ENCODE measurements at regions of chr11 and their contacts with region 1.

Region 1: DNA sequence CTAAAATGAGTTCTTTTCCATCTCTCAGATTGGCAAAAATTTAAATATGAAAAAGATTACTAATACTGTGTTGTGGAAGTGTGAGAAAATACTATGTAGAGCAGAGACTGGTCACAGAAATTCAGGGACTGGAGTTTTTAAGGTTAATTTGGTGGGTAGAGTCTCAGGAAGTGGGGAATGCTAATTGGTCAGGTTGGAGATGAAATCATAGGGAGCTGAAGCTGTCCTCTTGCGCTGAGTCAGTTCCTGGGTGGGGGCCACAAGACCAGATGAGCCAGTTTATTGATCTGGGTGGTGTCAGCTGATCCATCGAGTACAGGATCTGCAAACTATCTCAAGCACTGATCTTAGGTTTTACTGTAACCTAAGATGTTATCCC is 29.4 kb upstream of the TMEM86A start:
- DNase-seq: no peak
- ATAC-seq: no peak
- H3K4me3 ChIP-seq: no peak overlapping the region
- H3K4me3 Mint-ChIP-seq: peak overlapping the region in 2 of 10 donors; percentile 1 to 28
- H3K27ac ChIP-seq: no peak overlapping the region
- H3K27ac Mint-ChIP-seq: peak overlapping the region in 8 of 9 donors; percentile 6 to 89 (median 54)
- H3K4me1 ChIP-seq: peaks cover 20 to 26% of the 10 kb centered on the region in 2 donors
- H3K4me1 Mint-ChIP-seq: peaks cover 34 to 74% (median 54%) of the 10 kb centered on the region in 7 donors
- H3K27me3 ChIP-seq: no peaks in the 10 kb centered on the region
- H3K27me3 Mint-ChIP-seq: peaks cover 0 to 17% (median 0%) of the 10 kb centered on the region in 5 donors

Region 2: GRCh38 chr11:18457431-18457830 is 211.8 kb before region 1 on chr11:
- CTCF ChIA-PET with region 1: no interaction called
- POLR2A ChIA-PET with region 1: no interaction called
- intact Hi-C with region 1: no loop called
- DNase-seq: no peak
- ATAC-seq: no peak
- H3K4me3 ChIP-seq: no peak overlapping the region
- H3K4me3 Mint-ChIP-seq: no peak overlapping the region
- H3K27ac ChIP-seq: no peak overlapping the region
- H3K27ac Mint-ChIP-seq: no peak overlapping the region
- H3K4me1 ChIP-seq: no peaks in the 10 kb centered on the region
- H3K4me1 Mint-ChIP-seq: peaks cover 0 to 2% (median 0%) of the 10 kb centered on the region in 7 donors
- H3K27me3 ChIP-seq: no peaks in the 10 kb centered on the region
- H3K27me3 Mint-ChIP-seq: peaks cover 0 to 9% (median 3%) of the 10 kb centered on the region in 5 donors

Region 3: DNA sequence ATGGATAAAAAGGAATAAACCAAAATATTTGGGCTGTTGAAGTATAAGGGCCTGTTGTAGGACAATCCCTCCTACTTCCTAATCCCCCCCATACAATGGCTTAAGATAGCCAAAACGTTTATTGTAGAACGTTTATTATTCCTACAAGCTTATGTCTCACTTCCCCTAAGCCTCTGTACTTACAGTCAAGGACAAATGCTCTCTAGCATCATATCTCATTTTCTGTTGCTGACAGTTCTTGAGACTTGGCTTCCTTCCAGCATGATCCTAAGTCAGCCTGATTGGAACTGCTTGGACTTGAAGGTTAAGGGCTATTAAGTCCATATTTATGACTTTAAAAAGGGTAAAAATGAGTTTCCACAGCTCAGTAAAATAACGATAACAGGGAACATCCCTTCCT is 60.8 kb before region 1 on chr11:
- CTCF ChIA-PET with region 1: no interaction called
- POLR2A ChIA-PET with region 1: no interaction called
- intact Hi-C with region 1: no loop called
- DNase-seq: no peak
- ATAC-seq: no peak
- H3K4me3 ChIP-seq: no peak overlapping the region
- H3K4me3 Mint-ChIP-seq: no peak overlapping the region
- H3K27ac ChIP-seq: no peak overlapping the region
- H3K27ac Mint-ChIP-seq: no peak overlapping the region
- H3K4me1 ChIP-seq: no peaks in the 10 kb centered on the region
- H3K4me1 Mint-ChIP-seq: peaks cover 0 to 3% (median 0%) of the 10 kb centered on the region in 7 donors
- H3K27me3 ChIP-seq: no peaks in the 10 kb centered on the region
- H3K27me3 Mint-ChIP-seq: no peaks in the 10 kb centered on the region

Region 4: DNA sequence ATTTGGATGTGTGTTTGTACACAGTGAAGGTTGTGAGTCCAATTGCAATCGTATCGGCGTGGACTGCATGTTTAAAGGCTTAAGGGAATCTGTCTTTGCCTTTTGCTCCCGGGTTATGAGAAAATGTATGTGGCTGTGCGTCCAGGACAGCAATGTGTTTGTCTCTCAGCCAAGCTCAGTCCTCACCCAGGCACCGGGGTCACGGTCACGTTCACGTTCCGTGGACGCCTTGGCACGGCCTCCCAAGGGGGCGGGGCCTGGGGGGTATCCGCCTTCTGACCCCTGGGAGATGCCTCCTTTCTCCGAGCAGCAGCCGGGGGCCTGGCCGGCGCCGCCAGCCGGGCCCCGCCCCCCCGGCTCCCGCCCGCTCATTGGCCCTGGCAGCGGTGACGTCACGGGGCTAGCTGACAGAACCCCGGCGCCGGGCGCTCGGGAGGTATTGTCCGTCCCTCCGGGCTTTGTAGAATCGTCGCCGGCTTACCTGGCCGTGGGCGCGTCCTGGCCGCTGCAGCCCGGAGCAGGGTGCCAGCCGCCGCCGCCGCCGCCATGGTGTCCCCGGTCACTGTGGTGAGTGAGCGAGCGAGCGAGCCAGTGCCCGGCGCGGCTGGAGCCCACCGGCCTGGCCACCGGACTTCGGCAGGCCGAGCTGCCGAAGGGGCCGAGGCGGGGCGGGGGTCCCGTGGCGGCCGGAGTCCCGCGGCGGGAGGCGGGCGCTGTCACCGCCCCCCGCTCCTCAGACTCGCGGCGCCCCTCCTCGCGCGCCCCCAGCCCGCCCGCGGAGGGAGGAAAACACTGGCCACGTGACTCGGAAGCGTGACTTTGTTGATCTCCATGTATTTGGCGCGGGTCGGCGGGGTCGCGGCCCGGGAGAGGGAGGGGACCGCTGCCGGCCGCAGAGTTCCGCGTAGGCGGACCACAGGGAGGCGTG is 29.4 kb after region 1 on chr11 and contains the start of gene TMEM86A:
- CTCF ChIA-PET with region 1: interaction called, 3 read pairs
- POLR2A ChIA-PET with region 1: interaction called, 6 read pairs
- intact Hi-C with region 1: loop called in 1 of 2 experiments (anchors 1 kb)
- DNase-seq: peak; percentile 81 to 89 (median 87)
- ATAC-seq: peak; percentile 97
- H3K4me3 ChIP-seq: peak within 1 kb of the TSS; percentile 42
- H3K4me3 Mint-ChIP-seq: peak within 1 kb of the TSS; percentile 76 to 89 (median 84)
- H3K27ac ChIP-seq: peak within 1 kb of the TSS; percentile 72
- H3K27ac Mint-ChIP-seq: peak within 1 kb of the TSS; percentile 42 to 95 (median 89)
- H3K4me1 ChIP-seq: peaks cover 6% of the 10 kb centered on the region in 2 donors
- H3K4me1 Mint-ChIP-seq: peaks cover 14 to 27% (median 20%) of the 10 kb centered on the region in 7 donors
- H3K27me3 ChIP-seq: no peaks in the 10 kb centered on the region
- H3K27me3 Mint-ChIP-seq: peaks cover 0 to 39% (median 0%) of the 10 kb centered on the region in 5 donors
- total RNA-seq, gene TMEM86A: 0.53 to 6.5 (median 5.5) TPM

Region 5: GRCh38 chr11:18706330-18707243 is 37.4 kb after region 1 on chr11:
- CTCF ChIA-PET with region 1: no interaction called
- POLR2A ChIA-PET with region 1: interaction called, 4 read pairs
- intact Hi-C with region 1: loop called in 1 of 2 experiments (anchors 1 kb)
- DNase-seq: peak in 8 of 9 donors; percentile 34 to 73 (median 64)
- ATAC-seq: peak; percentile 83
- H3K4me3 ChIP-seq: peak overlapping the region; percentile 88
- H3K4me3 Mint-ChIP-seq: peak overlapping the region; percentile 90 to 98 (median 93)
- H3K27ac ChIP-seq: peak overlapping the region; percentile 68
- H3K27ac Mint-ChIP-seq: peak overlapping the region; percentile 81 to 98 (median 90)
- H3K4me1 ChIP-seq: peaks cover 9 to 10% of the 10 kb centered on the region in 2 donors
- H3K4me1 Mint-ChIP-seq: peaks cover 15 to 29% (median 25%) of the 10 kb centered on the region in 7 donors
- H3K27me3 ChIP-seq: no peaks in the 10 kb centered on the region
- H3K27me3 Mint-ChIP-seq: peaks cover 0 to 55% (median 0%) of the 10 kb centered on the region in 5 donors

Region 6: DNA sequence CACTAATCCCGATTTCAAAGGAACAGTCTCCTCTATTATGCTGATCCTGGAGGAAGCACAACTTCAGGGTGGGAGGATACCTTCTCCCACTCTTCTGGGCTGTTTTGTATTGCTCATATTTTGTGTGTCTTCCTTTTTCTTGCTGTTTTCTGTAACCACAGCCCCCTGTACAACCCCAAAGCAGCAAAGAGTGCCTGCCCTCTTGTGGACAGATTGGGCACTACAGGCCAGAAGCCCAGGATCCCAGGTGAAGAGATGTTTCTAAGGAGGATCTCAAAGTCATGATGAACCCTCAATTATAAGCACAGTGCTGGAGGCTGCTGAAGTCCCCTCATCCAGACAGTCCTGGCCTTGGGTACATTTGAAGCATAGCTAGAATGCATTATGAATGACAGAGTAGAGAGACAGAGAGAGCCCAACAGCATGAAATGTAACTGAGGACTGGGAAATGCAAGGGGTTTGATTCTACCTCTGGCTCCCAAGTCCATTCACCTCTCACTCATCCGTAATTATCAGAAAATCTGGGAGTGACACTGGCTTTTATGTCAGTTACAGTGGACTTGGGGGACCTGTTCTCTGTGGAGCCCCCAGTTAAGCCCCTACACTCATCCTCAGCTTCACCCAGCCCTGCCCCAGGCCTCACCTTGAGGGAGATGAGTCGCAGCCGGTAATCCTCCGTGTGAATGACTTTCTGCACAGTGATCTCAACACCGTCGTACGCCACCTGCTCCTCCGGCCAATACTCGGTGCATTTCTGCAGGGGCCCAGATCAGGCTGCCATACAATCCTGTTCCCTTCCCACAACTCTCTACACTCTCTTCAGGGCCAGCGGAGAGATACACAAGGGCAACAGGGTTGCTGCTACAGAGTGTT is 63.0 kb after region 1 on chr11:
- CTCF ChIA-PET with region 1: no interaction called
- POLR2A ChIA-PET with region 1: no interaction called
- intact Hi-C with region 1: loop called in 1 of 2 experiments (anchors 2 kb)
- DNase-seq: peak; percentile 44 to 81 (median 65)
- ATAC-seq: peak; percentile 79
- H3K4me3 ChIP-seq: no peak overlapping the region
- H3K4me3 Mint-ChIP-seq: no peak overlapping the region
- H3K27ac ChIP-seq: no peak overlapping the region
- H3K27ac Mint-ChIP-seq: peak overlapping the region in 1 of 9 donors; percentile 32
- H3K4me1 ChIP-seq: peaks cover 5 to 6% of the 10 kb centered on the region in 2 donors
- H3K4me1 Mint-ChIP-seq: peaks cover 4 to 15% (median 13%) of the 10 kb centered on the region in 7 donors
- H3K27me3 ChIP-seq: no peaks in the 10 kb centered on the region
- H3K27me3 Mint-ChIP-seq: peaks cover 0 to 9% (median 0%) of the 10 kb centered on the region in 5 donors

Region 7: DNA sequence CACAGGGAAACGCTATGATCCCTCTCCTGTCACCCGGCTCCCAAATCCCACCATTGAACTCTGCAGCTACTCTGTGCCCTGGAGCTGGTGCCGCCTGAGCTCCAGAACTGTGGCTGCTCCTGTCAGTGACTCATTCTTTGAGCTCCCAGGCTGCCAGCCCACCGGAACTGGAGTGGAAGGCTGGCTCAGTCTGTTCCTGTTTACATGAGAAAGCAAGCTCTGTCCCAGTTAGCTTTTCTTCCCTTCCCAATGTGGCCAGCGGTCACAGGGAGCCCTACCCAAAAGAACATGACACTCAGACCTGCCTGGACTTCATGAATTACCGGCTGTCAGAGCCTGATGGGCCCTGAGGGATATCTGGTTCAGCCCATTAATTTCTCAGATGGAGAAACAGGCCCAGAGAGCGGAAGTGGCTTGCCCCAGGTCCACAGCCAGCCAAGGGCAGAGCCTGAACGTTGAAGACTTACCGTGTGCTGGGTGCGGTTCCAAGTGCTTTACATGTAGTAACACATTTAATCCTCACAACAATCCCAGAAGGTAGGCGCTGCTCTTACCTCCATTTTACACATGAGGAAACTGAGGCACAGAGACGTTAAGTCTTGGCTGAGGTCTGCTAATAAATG is 80.6 kb after region 1 on chr11:
- CTCF ChIA-PET with region 1: no interaction called
- POLR2A ChIA-PET with region 1: no interaction called
- intact Hi-C with region 1: no loop called
- DNase-seq: no peak
- ATAC-seq: no peak
- H3K4me3 ChIP-seq: no peak overlapping the region
- H3K4me3 Mint-ChIP-seq: no peak overlapping the region
- H3K27ac ChIP-seq: no peak overlapping the region
- H3K27ac Mint-ChIP-seq: no peak overlapping the region
- H3K4me1 ChIP-seq: no peaks in the 10 kb centered on the region
- H3K4me1 Mint-ChIP-seq: peaks cover 0 to 4% (median 0%) of the 10 kb centered on the region in 7 donors
- H3K27me3 ChIP-seq: no peaks in the 10 kb centered on the region
- H3K27me3 Mint-ChIP-seq: peaks cover 0 to 13% (median 0%) of the 10 kb centered on the region in 5 donors

Region 8: GRCh38 chr11:18775492-18776292 is 106.5 kb after region 1 on chr11:
- CTCF ChIA-PET with region 1: no interaction called
- POLR2A ChIA-PET with region 1: no interaction called
- intact Hi-C with region 1: no loop called
- DNase-seq: peak in 4 of 9 donors; percentile 6 to 60 (median 16)
- ATAC-seq: no peak
- H3K4me3 ChIP-seq: no peak overlapping the region
- H3K4me3 Mint-ChIP-seq: no peak overlapping the region
- H3K27ac ChIP-seq: no peak overlapping the region
- H3K27ac Mint-ChIP-seq: no peak overlapping the region
- H3K4me1 ChIP-seq: no peaks in the 10 kb centered on the region
- H3K4me1 Mint-ChIP-seq: peaks cover 7 to 23% (median 9%) of the 10 kb centered on the region in 7 donors
- H3K27me3 ChIP-seq: no peaks in the 10 kb centered on the region
- H3K27me3 Mint-ChIP-seq: peaks cover 3 to 18% (median 7%) of the 10 kb centered on the region in 5 donors

Measured in naive thymus-derived CD4-positive, alpha-beta T cell (primary cell).